ENCODE measurements at regions of chr22 and their contacts with region 1.

Region 1: GRCh38 chr22:44406341-44407170 is 91.5 kb downstream of the RTL6 start:
- DNase-seq: peak in 1 of 2 experiments; percentile 11
- H3K4me3 ChIP-seq: no peak overlapping the region
- H3K4me3 Mint-ChIP-seq: no peak overlapping the region
- H3K27ac Mint-ChIP-seq: no peak overlapping the region
- H3K4me1 ChIP-seq: no peaks in the 10 kb centered on the region
- H3K4me1 Mint-ChIP-seq: no peaks in the 10 kb centered on the region
- H3K27me3 ChIP-seq: no peaks in the 10 kb centered on the region
- H3K27me3 Mint-ChIP-seq: peaks cover 20% of the 10 kb centered on the region
- CTCF ChIP-seq: no peak

Region 2: GRCh38 chr22:44382116-44383038 is 24.2 kb before region 1 on chr22:
- CTCF ChIA-PET with region 1: no interaction called
- POLR2A ChIA-PET with region 1: no interaction called
- intact Hi-C with region 1: loop called (anchors 1 kb)
- DNase-seq: no peak
- H3K4me3 ChIP-seq: no peak overlapping the region
- H3K4me3 Mint-ChIP-seq: no peak overlapping the region
- H3K27ac Mint-ChIP-seq: no peak overlapping the region
- H3K4me1 ChIP-seq: no peaks in the 10 kb centered on the region
- H3K4me1 Mint-ChIP-seq: no peaks in the 10 kb centered on the region
- H3K27me3 ChIP-seq: no peaks in the 10 kb centered on the region
- H3K27me3 Mint-ChIP-seq: peaks cover 16% of the 10 kb centered on the region
- CTCF ChIP-seq: no peak

Region 3: DNA sequence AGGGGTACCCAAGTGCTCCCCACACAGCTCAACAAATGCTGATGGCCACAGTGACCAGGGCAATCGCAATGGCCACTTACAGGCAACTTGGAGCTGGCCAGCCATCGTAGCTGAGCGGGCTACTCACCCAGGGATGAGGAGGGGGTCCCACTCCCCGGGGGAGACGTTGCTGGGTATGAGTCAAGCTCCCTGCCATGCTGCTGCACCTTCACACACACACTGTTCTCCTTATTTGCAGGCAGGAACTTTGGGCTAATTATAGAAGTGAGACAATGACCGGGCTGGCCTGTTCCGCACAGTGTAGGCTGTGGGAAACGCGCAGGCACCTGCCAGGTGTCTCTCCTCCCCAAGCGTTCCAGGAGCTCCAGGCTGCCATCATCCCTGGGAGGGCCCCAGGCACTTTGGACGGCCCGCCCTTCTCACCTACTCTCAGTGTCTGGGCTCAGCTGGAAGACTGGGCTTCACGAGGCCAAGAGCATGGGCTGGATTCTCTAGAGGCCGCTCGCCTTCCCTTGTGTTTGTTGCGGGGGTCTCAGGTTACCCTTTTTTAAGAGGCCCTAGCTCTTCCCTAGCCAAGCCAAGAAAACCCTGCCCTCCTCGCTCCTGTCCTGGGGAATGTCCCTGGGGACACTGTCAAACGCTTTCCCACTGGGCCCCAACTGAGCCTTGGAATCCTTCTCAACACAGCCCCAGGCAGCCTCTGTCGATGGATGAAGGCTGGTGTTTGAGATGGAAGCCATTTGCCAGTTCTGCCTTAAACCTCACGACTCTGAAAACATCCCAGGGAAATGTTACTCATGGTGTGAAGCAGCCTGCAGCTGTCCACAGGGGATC is 18.5 kb after region 1 on chr22:
- CTCF ChIA-PET with region 1: no interaction called
- POLR2A ChIA-PET with region 1: no interaction called
- intact Hi-C with region 1: no loop called
- DNase-seq: no peak
- H3K4me3 ChIP-seq: no peak overlapping the region
- H3K4me3 Mint-ChIP-seq: no peak overlapping the region
- H3K27ac Mint-ChIP-seq: no peak overlapping the region
- H3K4me1 ChIP-seq: peaks cover 6% of the 10 kb centered on the region; the same call in 1 of the 2 replicates
- H3K4me1 Mint-ChIP-seq: peaks cover 7% of the 10 kb centered on the region
- H3K27me3 ChIP-seq: no peaks in the 10 kb centered on the region
- H3K27me3 Mint-ChIP-seq: peaks cover 6% of the 10 kb centered on the region
- CTCF ChIP-seq: no peak

Region 4: DNA sequence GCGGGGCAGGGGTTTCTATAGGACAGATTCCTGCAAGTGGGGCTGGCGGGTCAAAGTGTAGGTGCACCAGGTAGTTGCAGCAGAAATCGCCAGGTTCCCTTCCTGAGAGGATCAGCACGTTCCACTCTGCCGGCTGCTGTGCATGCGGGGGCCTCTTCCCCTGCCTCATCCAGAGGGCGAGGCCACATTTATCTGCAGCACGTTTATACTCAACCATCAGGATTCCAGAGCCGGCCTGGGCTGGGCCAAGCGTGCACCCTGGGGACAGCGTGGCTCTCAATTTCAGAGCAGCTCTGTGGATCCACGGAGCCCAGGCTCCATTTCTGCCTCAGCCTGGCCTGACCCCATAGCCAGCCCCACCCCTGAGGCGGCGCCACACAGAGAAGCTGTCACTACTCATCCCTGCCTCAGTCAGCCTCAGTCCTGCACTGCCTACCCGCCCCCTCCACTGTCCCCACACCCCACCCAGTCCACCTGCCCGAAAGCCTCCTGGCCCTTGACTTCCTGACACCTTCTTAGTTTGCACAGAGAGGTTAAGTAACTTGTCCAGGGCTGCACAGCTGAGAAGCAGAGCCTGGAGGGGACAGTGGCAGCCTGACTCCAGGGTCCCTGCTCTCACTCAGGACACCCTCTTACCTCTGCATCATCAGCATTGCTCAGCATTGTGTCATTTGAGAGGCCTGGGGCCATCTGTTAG is 137.4 kb after region 1 on chr22:
- CTCF ChIA-PET with region 1: no interaction called
- POLR2A ChIA-PET with region 1: no interaction called
- intact Hi-C with region 1: no loop called
- DNase-seq: peak; percentile 39 to 54
- H3K4me3 ChIP-seq: peak overlapping the region; percentile 22
- H3K4me3 Mint-ChIP-seq: peak overlapping the region; percentile 37
- H3K27ac Mint-ChIP-seq: no peak overlapping the region
- H3K4me1 ChIP-seq: peaks cover 3% of the 10 kb centered on the region; the same call in 1 of the 2 replicates
- H3K4me1 Mint-ChIP-seq: no peaks in the 10 kb centered on the region
- H3K27me3 ChIP-seq: no peaks in the 10 kb centered on the region
- H3K27me3 Mint-ChIP-seq: peaks cover 5% of the 10 kb centered on the region
- CTCF ChIP-seq: no peak

Measured in Caco-2 (cell line).